Posterior cingulate gyrus (tissue), 11 donors: ENCODE measurements at regions of chr19 and their contacts with region 1.

Region 1: GRCh38 chr19:57389730-57390598 is at the start of gene ZNF548:
- DNase-seq: peak; percentile 94 to 100 (median 98)

Region 2: GRCh38 chr19:57410877-57411671 is 21.1 kb after region 1 on chr19 and contains the start of gene ZNF17:
- intact Hi-C with region 1: loop called (anchors 2 kb)
- DNase-seq: peak; percentile 89 to 99 (median 96)